ENCODE measurements at regions of chr15 and their contacts with region 1.

Region 1: GRCh38 chr15:56245871-56246814 is 2.5 kb upstream of the RFX7 start:
- DNase-seq: peak; percentile 97
- H3K4me3 Mint-ChIP-seq: peak overlapping the region; percentile 98
- H3K27ac Mint-ChIP-seq: peak overlapping the region; percentile 99
- H3K4me1 Mint-ChIP-seq: peaks cover 29% of the 10 kb centered on the region
- H3K27me3 Mint-ChIP-seq: peaks cover 9% of the 10 kb centered on the region

Region 2: DNA sequence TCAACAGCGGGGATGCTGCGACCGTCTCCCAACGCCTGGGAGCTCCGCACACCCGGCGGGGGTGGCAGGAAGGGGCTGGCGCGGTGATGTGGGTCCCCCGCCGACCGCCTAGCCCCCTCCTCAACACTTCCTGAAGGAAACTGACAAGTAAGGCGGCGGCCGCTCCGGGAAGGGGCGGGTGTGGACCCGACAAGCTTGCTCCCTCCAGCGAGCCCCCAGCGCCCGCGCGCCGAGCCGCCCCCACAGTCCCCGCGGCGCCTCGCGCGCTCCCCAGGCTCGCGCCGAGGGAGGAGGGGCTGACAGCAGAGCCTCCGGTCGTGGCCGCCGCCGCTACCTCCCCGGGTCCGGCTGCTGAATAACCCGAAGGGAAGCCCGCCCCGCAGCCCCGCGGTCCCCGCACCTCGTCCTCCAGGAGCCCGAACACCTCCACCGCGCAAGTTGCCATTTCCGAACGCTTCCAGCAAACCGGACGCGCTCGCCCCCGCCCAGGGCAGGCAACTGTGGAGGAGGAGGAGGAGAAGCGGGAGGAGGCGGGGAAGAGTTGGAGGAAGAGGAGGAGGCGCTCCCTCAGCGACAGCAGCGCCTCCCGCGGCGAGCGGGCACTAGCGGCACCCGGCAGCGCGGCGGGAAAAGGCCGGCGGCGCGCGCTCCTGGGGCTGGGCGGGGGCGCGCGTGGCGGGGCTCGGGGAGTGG is 252.9 kb before region 1 on chr15 and contains the start of gene NEDD4:
- intact Hi-C with region 1: loop called (anchors 2 kb)
- DNase-seq: peak; percentile 93
- H3K4me3 Mint-ChIP-seq: peak within 1 kb of the TSS; percentile 89
- H3K27ac Mint-ChIP-seq: peak within 1 kb of the TSS; percentile 76
- H3K4me1 Mint-ChIP-seq: peaks cover 24% of the 10 kb centered on the region
- H3K27me3 Mint-ChIP-seq: peaks cover 38% of the 10 kb centered on the region
- total RNA-seq, gene NEDD4: 9.5 and 10.7 TPM in 2 replicates

Region 3: DNA sequence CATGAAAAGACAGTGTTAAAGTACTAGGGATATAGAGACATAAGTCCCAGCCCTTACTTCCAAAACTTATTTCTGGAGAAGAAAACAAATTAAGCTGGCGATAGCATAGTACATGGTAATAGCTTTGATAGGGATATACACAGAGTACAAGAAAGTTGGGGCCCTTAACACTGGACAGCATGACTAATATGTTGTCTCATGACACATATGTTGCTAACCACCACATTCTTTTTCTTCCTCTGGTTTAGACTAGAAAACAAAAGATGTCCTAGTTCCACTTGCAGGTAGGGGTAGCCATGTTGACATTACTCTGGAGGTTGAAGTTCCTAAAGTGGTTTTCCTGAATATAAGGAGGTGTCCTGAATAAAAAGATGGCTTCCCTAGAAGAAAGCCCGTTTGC is 77.7 kb before region 1 on chr15:
- intact Hi-C with region 1: loop called (anchors 1 kb)
- DNase-seq: no peak
- H3K4me3 Mint-ChIP-seq: no peak overlapping the region
- H3K27ac Mint-ChIP-seq: no peak overlapping the region
- H3K4me1 Mint-ChIP-seq: peaks cover 32% of the 10 kb centered on the region
- H3K27me3 Mint-ChIP-seq: no peaks in the 10 kb centered on the region

Region 4: DNA sequence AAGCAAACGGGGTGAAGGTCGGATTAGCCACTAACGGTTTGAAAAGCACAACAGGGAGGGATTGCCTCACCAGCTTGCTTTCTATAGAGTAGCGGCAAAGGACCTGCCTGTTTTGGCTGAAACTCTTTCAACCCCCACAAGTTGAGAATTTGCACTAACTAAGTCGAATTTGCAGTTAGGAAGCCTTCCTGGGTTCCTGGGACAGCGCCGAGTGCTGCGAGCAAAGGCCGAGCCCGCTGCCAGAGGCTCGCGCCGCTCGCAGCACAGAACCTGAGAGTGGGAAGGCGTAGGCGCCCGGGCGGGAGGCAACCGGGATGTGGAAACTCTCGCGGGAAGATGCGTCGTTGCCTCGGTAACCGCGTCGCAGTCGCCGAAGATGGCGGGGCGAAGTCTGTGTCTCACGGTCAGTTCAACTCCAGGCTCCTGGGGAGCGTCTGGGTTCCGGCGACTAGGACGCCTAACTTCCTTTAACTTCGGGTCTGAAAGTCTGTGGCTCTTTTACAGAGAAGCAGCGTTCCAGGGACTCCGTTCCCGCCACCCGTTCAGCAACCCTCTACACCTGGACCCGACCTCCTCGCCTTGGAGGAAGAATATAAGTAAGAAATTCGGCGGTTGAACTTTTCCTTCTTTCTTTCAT is 119.0 kb after region 1 on chr15 and contains the start of gene TEX9:
- intact Hi-C with region 1: loop called (anchors 5 kb)
- DNase-seq: peak; percentile 94
- H3K4me3 Mint-ChIP-seq: peak within 1 kb of the TSS; percentile 89
- H3K27ac Mint-ChIP-seq: no peak within 1 kb of the TSS
- H3K4me1 Mint-ChIP-seq: peaks cover 15% of the 10 kb centered on the region
- H3K27me3 Mint-ChIP-seq: peaks cover 41% of the 10 kb centered on the region
- total RNA-seq, gene TEX9: 0.35 and 1.6 TPM in 2 replicates

Region 5: DNA sequence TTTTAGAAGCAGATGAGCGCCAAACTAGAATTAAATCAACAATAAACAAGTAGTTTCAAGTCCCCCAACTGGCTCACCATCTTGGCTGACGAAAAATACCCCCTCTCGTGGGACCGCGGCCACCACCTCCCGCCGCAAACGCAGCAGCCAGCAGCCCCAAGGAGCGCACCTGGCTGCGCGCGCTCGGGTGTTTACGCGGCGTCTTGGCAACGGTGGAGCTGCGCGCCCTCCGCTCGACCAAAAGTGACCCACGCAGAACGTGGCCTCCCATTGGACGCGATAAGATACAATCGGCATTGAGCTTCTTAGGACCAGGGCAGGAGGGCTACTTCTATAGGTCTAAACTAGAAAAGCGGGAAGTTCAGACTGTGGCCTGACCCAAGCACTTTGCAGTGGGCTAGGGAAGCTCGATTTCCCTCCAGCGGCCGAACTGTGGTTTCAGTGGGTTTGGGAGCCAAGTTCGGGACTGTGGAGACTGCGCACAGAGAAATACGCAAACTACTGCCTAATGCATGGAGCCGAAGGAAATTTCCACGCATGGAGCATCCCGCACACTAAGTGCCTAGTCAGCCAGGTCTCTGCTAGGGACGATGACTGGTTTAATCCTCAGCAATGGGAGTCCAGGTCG is 218.9 kb after region 1 on chr15 and contains the start of gene MNS1:
- intact Hi-C with region 1: loop called (anchors 2 kb)
- DNase-seq: peak; percentile 94
- H3K4me3 Mint-ChIP-seq: peak within 1 kb of the TSS; percentile 89
- H3K27ac Mint-ChIP-seq: peak within 1 kb of the TSS; percentile 77
- H3K4me1 Mint-ChIP-seq: peaks cover 20% of the 10 kb centered on the region
- H3K27me3 Mint-ChIP-seq: peaks cover 25% of the 10 kb centered on the region
- total RNA-seq, gene MNS1: 0.45 and 0.86 TPM in 2 replicates

Region 6: GRCh38 chr15:56886932-56887781 is 641.0 kb after region 1 on chr15:
- intact Hi-C with region 1: loop called (anchors 10 kb)
- DNase-seq: peak; percentile 94
- H3K4me3 Mint-ChIP-seq: peak overlapping the region; percentile 82
- H3K27ac Mint-ChIP-seq: peak overlapping the region; percentile 87
- H3K4me1 Mint-ChIP-seq: peaks cover 20% of the 10 kb centered on the region
- H3K27me3 Mint-ChIP-seq: peaks cover 7% of the 10 kb centered on the region